Panc1 (cell line): ENCODE measurements at regions of chr21 and their contacts with region 1.

Region 1: GRCh38 chr21:33246506-33246905 is 16.8 kb downstream of the IFNAR2 start:
- DNase-seq: no peak
- ATAC-seq: no peak
- H3K4me3 ChIP-seq: no peak overlapping the region
- H3K27ac ChIP-seq: no peak overlapping the region
- H3K4me1 ChIP-seq: no peaks in the 10 kb centered on the region
- H3K27me3 ChIP-seq: no peaks in the 10 kb centered on the region
- CTCF ChIP-seq: no peak

Region 2: DNA sequence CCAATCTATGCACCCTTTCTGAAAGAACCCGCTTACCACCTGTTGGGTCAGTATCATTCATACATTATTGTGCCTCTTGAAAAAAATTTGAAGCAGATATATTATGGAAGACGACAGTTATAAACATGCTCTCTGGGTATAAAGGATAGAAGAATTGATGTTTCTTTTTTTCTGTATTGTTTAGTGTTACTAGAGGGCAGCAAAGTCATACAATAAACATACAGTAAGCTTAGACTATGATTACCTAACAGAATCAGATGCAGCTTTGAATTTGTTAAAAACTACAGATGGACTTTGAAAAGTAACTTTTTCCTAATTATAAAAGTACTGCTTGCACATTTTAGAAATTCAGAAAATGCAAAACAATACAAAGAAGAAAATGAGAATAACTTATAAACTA is 463.8 kb before region 1 on chr21:
- CTCF ChIA-PET with region 1: no interaction called
- POLR2A ChIA-PET with region 1: no interaction called
- in situ Hi-C with region 1: no loop called
- intact Hi-C with region 1: no loop called
- DNase-seq: no peak
- ATAC-seq: no peak
- H3K4me3 ChIP-seq: no peak overlapping the region
- H3K27ac ChIP-seq: no peak overlapping the region
- H3K4me1 ChIP-seq: no peaks in the 10 kb centered on the region
- H3K27me3 ChIP-seq: no peaks in the 10 kb centered on the region
- CTCF ChIP-seq: peak; percentile 7; the same call in 1 of the 2 replicates

Region 3: DNA sequence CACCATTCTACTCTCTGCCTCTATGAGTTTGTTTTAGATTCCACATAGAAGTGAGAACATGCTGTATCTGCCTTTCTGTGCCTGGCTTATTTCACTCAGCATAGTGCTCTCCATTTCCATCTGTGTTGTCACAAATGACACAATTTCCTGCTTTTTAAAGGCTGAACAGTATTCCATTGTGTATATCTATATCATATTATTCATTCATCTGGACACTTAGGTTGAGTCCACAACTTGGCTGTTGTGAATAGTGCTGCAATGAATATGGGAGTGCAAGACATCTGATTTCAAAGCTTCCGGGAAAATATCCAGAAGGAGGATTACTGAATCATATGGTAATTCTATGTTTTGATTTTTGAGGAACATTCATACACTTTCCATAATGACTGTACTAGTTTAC is 362.1 kb after region 1 on chr21:
- CTCF ChIA-PET with region 1: no interaction called
- POLR2A ChIA-PET with region 1: no interaction called
- in situ Hi-C with region 1: no loop called
- intact Hi-C with region 1: no loop called
- DNase-seq: no peak
- ATAC-seq: no peak
- H3K4me3 ChIP-seq: no peak overlapping the region
- H3K27ac ChIP-seq: no peak overlapping the region
- H3K4me1 ChIP-seq: no peaks in the 10 kb centered on the region
- H3K27me3 ChIP-seq: no peaks in the 10 kb centered on the region
- CTCF ChIP-seq: no peak

Region 4: DNA sequence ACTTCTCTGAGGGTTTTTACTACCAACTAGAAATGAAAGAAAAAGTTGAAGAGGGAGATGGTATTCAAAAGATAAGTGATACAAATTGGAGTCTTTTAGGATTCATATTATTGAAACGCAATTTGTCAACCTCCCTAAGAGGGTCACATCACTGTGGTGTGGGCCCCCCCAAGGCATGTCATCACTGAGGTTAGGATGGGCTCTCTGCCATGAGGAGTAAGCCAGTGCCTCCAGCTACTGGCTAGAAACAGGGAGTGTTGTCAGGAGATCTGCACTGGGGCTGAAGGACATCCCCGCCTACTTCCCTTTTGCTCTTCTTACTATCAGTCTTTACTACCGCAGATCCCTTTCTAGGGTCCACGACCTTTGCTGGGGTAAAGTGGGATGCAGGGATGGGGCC is 421.7 kb after region 1 on chr21:
- CTCF ChIA-PET with region 1: no interaction called
- POLR2A ChIA-PET with region 1: interaction called, 12 read pairs
- in situ Hi-C with region 1: no loop called
- intact Hi-C with region 1: no loop called
- DNase-seq: no peak
- ATAC-seq: no peak
- H3K4me3 ChIP-seq: no peak overlapping the region
- H3K27ac ChIP-seq: no peak overlapping the region
- H3K4me1 ChIP-seq: peaks cover 9% of the 10 kb centered on the region
- H3K27me3 ChIP-seq: no peaks in the 10 kb centered on the region
- CTCF ChIP-seq: no peak

Region 5: GRCh38 chr21:33789697-33790096 is 543.2 kb after region 1 on chr21:
- CTCF ChIA-PET with region 1: no interaction called
- POLR2A ChIA-PET with region 1: no interaction called
- in situ Hi-C with region 1: no loop called
- intact Hi-C with region 1: no loop called
- DNase-seq: no peak
- ATAC-seq: no peak
- H3K4me3 ChIP-seq: no peak overlapping the region
- H3K27ac ChIP-seq: no peak overlapping the region
- H3K4me1 ChIP-seq: no peaks in the 10 kb centered on the region
- H3K27me3 ChIP-seq: no peaks in the 10 kb centered on the region
- CTCF ChIP-seq: no peak